A549 (cell line): ENCODE measurements at regions of chr20 and their contacts with region 1.

Region 1: GRCh38 chr20:31856516-31856915 is 11.1 kb upstream of the FOXS1 start:
- DNase-seq: no peak
- ATAC-seq: no peak
- H3K4me3 ChIP-seq: no peak overlapping the region
- H3K27ac ChIP-seq: no peak overlapping the region
- H3K4me1 ChIP-seq: peaks cover 13% of the 10 kb centered on the region
- CTCF ChIP-seq: no peak
- EP300 ChIP-seq: no peak
- POLR2A ChIP-seq: no peak
- RAD21 ChIP-seq: no peak

Region 2: GRCh38 chr20:31869942-31870725 is 13.6 kb after region 1 on chr20 and contains the starts of genes DUSP15 and TTLL9:
- CTCF ChIA-PET with region 1: interaction called, 64 read pairs
- POLR2A ChIA-PET with region 1: no interaction called
- DNase-seq: no peak
- ATAC-seq: peak; percentile 66 to 83
- H3K4me3 ChIP-seq: peak within 1 kb of the TSS; percentile 70
- H3K27ac ChIP-seq: peak within 1 kb of the TSS; percentile 66 to 90
- H3K4me1 ChIP-seq: peaks cover 12% of the 10 kb centered on the region; the same call in 2 of the 3 replicates
- CTCF ChIP-seq: no peak
- EP300 ChIP-seq: no peak
- POLR2A ChIP-seq: no peak; the same call in 1 of the 2 replicates
- RAD21 ChIP-seq: no peak
- polyA plus RNA-seq, gene DUSP15: 0.46 and 0.53 TPM in 2 replicates
- polyA plus RNA-seq, gene TTLL9: 0.06 and 0.08 TPM in 2 replicates

Region 3: GRCh38 chr20:32007787-32008616 is 151.5 kb after region 1 on chr20:
- CTCF ChIA-PET with region 1: interaction called, 12 read pairs
- POLR2A ChIA-PET with region 1: no interaction called
- DNase-seq: no peak
- ATAC-seq: no peak
- H3K4me3 ChIP-seq: no peak overlapping the region
- H3K27ac ChIP-seq: no peak overlapping the region
- H3K4me1 ChIP-seq: no peaks in the 10 kb centered on the region
- CTCF ChIP-seq: no peak
- EP300 ChIP-seq: no peak
- POLR2A ChIP-seq: no peak
- RAD21 ChIP-seq: no peak

Region 4: DNA sequence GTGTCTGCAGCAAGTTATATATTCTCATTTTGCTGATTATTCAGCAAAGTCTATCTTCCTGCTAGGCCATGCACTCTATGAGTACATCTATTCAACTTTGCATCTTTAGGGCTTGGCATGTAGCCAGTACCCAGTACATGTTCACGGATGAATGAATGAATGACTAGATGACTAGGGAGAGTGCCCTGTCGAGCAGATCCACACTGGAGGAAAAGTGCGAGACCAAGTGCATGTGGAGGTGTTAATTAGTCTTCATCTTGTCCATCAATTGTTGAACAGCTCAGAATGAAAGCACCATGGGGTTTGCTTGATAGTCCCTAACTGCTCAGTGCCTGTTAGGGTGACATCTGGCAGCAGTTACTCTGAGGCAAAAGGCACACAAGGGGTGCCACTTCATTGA is 283.4 kb after region 1 on chr20:
- CTCF ChIA-PET with region 1: no interaction called
- POLR2A ChIA-PET with region 1: no interaction called
- DNase-seq: no peak
- ATAC-seq: no peak
- H3K4me3 ChIP-seq: no peak overlapping the region
- H3K27ac ChIP-seq: no peak overlapping the region
- H3K4me1 ChIP-seq: no peaks in the 10 kb centered on the region
- CTCF ChIP-seq: no peak
- EP300 ChIP-seq: no peak
- POLR2A ChIP-seq: no peak
- RAD21 ChIP-seq: no peak